Activated naive CD4-positive, alpha-beta T cell treated with anti-CD3 and anti-CD28 coated beads for 36 hours (primary cell): ENCODE measurements at regions of chr11 and their contacts with region 1.

Region 1: DNA sequence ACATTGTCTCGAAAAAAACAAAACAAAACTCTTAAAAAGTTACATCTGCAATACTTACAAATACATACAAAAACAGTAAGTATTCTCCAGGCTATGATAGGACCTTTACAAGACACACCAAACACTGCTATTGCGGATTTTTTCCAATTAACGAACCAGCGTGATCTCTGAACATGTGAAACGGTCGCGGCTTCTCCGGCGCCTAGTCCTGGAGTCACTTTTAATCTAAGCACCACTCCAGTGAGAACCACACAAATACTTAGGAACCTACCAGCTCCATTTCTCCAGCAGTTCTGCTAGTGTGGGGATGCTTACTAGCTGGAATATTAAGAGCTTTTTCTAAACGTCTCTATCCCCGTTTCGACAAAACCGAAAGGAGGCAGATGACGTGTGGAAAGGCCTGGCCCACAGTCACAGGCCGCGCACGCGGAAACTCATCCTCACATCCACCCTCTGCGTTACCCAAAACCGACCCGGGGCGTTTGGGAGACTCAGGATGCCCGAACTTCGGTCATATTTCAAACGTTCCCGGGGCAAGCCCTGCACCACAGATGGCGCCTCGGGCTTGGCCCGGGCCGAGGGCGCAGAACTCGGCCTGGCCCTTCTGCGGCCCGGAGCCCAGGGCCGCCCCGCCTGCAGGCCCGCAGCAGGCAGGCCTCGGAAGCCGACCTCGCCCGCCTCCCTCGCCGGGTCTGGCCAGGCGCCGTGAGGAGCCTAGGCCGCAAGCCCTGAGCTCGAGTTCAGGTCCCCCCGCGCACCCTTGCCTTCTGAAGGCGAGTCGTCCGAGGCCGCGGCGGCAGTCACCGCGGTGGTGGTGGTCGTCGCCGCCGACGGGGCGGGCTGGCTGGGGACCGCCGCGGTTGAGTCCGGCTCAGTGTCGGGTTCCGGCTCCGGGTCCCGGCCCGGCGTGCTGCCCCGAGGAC is 575 bp downstream of the FNBP4 start:
- DNase-seq: peak; percentile 85
- H3K4me3 Mint-ChIP-seq: peak overlapping the region; percentile 99
- H3K27ac Mint-ChIP-seq: peak overlapping the region; percentile 100
- H3K4me1 Mint-ChIP-seq: peaks cover 18% of the 10 kb centered on the region
- H3K27me3 Mint-ChIP-seq: no peaks in the 10 kb centered on the region

Region 2: DNA sequence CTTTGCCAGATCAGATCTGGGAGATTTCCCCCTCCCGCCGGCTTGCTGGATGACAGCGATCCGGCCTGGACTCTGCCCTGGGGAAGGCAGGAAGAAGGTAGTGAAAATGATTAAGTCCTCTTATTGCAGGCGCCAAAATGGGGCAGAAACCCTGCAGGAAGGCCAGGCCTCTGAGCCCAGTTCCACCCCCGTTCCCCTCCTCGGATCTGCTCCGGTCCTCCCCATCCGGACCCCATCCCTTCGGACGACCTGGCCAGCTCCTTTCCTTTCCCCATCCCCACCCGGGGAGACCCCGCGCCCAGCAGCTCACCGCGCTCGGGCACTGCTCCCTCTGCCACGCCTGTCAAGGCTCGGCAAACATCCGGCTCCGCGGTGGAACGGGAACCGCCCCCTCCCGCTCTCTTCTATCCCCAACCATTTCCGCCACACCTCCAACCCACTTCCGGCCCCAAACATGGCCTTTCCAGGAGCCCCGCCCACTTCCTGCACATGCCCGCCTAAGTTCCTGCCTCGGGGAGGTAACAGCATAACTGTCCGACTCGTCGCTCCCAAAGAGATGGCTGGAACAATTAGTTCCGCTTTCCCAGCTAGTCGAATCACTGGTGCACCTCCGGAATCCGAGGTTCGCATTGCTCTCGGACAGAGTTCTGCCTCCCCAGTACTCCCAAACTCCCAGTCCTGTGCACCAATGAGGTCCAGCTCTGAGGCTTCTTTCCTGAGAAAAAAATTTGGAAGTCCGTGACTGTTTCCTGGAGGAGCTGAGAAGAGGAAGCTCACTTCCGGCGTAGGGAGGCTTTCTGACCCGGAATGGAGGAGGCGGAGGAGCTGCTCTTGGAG is 1066.1 kb before region 1 on chr11 and contains the starts of genes ARHGAP1 and ZNF408:
- CTCF ChIA-PET with region 1: no interaction called
- intact Hi-C with region 1: loop called (anchors 2 kb)
- DNase-seq: peak; percentile 100
- H3K4me3 Mint-ChIP-seq: peak within 1 kb of the TSS; percentile 97
- H3K27ac Mint-ChIP-seq: peak within 1 kb of the TSS; percentile 97
- H3K4me1 Mint-ChIP-seq: peaks cover 45% of the 10 kb centered on the region
- H3K27me3 Mint-ChIP-seq: no peaks in the 10 kb centered on the region
- total RNA-seq, gene ARHGAP1: 31.2 to 32.6 TPM
- total RNA-seq, gene ZNF408: 7.3 to 7.6 TPM

Region 3: GRCh38 chr11:47236482-47236881 is 530.1 kb before region 1 on chr11:
- CTCF ChIA-PET with region 1: no interaction called
- intact Hi-C with region 1: no loop called
- DNase-seq: no peak
- H3K4me3 Mint-ChIP-seq: no peak overlapping the region
- H3K27ac Mint-ChIP-seq: peak overlapping the region; percentile 37
- H3K4me1 Mint-ChIP-seq: peaks cover 30% of the 10 kb centered on the region
- H3K27me3 Mint-ChIP-seq: no peaks in the 10 kb centered on the region

Region 4: DNA sequence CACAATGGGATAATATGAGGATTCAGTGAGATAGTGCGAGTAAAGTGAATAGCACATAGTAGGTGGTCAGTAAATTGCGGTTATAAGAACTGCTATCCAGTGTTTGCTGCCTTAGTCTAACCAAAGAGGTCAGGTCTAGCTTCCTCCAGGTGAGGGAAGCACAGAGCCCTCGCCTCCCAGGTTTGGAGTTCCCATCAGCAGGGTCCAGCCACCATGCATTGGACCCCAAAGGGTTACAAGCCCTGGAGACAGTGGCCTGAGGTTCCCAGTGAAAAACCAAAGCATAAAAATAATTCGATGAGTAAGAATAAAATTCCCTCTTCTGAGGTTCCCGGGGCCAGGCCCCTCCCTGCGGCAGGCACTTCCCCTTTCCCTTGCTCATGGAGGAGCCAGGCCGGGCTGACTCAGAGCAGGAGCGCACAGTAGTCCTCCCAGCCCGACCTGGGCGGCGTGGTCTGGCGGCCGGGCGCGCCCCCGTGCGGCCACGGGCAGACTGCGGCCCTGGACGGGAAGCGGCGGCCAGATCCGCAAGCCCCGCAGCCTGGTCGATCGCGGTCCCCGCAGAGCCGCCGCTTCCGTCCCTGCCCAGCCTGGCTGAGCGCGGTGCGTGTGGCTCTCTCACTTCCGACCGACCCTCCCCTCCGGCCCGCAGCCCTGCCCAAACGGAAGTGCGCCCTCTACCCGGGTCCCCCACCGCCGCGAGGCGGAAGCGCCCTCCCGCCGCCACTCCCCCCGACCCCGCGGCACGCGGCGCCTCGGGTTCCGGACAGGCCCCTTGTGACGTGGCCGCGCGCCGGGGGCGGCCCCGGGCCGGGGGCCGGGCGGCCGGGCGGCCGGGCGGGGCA is 358.6 kb before region 1 on chr11 and contains the start of gene SLC39A13:
- CTCF ChIA-PET with region 1: no interaction called
- intact Hi-C with region 1: loop called (anchors 1 kb)
- DNase-seq: peak; percentile 91
- H3K4me3 Mint-ChIP-seq: peak within 1 kb of the TSS; percentile 92
- H3K27ac Mint-ChIP-seq: peak within 1 kb of the TSS; percentile 92
- H3K4me1 Mint-ChIP-seq: peaks cover 25% of the 10 kb centered on the region
- H3K27me3 Mint-ChIP-seq: no peaks in the 10 kb centered on the region
- total RNA-seq, gene SLC39A13: 9.2 TPM

Region 5: GRCh38 chr11:47552566-47553416 is 213.8 kb before region 1 on chr11 and contains the start of gene CELF1:
- CTCF ChIA-PET with region 1: no interaction called
- intact Hi-C with region 1: loop called (anchors 1 kb)
- DNase-seq: peak; percentile 95
- H3K4me3 Mint-ChIP-seq: peak within 1 kb of the TSS; percentile 97
- H3K27ac Mint-ChIP-seq: peak within 1 kb of the TSS; percentile 95
- H3K4me1 Mint-ChIP-seq: peaks cover 42% of the 10 kb centered on the region
- H3K27me3 Mint-ChIP-seq: no peaks in the 10 kb centered on the region
- total RNA-seq, gene CELF1: 104 to 105 TPM

Region 6: DNA sequence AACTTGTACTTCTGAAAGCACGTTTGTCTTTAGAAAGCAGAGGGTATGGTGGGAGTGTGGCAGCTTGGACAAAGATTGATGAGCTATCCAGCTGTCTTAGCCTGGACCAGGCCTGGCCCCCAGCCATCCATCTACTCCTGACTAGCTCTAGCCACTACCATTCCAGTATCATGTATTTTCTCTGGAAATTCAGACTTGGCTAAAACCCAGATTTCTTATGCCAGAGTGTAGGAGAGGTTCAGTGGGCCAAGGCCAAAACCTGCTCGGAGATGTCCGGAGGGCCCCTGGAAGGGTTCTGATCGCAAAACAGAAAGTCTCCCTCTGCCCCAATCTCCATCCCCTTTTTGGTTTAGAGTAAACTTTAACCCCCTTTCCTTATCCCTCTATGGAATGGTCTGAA is 99.4 kb before region 1 on chr11:
- CTCF ChIA-PET with region 1: interaction called, 3 read pairs
- intact Hi-C with region 1: loop called (anchors 1 kb)
- DNase-seq: no peak
- H3K4me3 Mint-ChIP-seq: no peak overlapping the region
- H3K27ac Mint-ChIP-seq: no peak overlapping the region
- H3K4me1 Mint-ChIP-seq: peaks cover 24% of the 10 kb centered on the region
- H3K27me3 Mint-ChIP-seq: no peaks in the 10 kb centered on the region

Region 7: DNA sequence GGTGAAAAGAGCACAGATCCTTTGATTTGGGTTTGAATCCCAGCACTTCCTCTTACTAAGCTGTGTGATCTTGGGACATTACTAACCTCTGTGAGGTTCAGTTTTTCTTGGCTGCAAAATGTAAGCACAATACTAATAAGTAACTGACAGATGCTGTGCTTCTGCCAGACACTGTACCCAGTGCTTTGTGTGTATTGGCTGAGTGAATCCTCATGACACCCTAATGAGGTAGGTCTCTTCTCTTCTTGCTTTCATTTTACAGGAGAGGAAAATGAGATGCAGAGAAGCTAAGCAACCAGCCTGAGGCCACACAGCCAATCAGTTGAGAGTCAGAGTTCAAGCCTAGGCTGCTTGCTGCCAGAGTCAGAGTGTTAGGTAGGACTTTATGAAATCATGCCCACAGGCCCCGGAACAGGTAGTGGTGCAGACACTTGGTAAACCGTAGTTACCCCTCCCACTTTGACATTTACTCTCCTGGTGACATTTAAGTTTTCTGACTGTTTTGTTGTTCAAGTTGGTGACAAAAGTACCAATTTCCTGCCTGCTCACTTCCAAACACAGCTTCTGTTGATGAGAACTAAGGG is 235.0 kb after region 1 on chr11:
- CTCF ChIA-PET with region 1: no interaction called
- intact Hi-C with region 1: loop called (anchors 2 kb)
- DNase-seq: peak; percentile 89
- H3K4me3 Mint-ChIP-seq: peak overlapping the region; percentile 66
- H3K27ac Mint-ChIP-seq: peak overlapping the region; percentile 96
- H3K4me1 Mint-ChIP-seq: peaks cover 88% of the 10 kb centered on the region
- H3K27me3 Mint-ChIP-seq: no peaks in the 10 kb centered on the region